ENCODE measurements at regions of chr5 and their contacts with region 1.

Region 1: GRCh38 chr5:122192497-122193496 is 63.5 kb downstream of the ZNF474 start:
- DNase-seq: no peak
- ATAC-seq: peak; percentile 63
- H3K4me3 Mint-ChIP-seq: no peak overlapping the region
- H3K27ac Mint-ChIP-seq: no peak overlapping the region
- H3K4me1 Mint-ChIP-seq: no peaks in the 10 kb centered on the region
- H3K27me3 Mint-ChIP-seq: peaks cover 13% of the 10 kb centered on the region

Region 2: DNA sequence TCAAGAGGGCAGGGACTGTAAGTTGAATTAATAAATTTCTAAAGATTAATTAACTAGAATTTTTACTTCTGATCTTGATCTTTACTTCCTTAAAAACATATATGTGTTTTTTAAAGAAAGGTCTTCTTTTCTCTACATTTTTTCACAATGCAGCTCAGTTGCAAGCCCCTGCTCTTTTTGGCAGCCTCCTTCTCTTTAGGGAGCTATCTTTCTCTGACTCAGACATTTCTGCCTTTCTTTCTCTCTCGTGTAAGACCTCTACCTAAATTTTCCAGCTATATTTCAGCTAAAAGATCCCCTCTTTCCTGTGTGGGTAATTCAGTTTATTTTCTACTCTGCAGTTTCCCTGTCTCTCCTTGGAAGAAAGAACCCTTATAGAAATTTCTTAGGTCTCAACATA is 80.9 kb after region 1 on chr5:
- CTCF ChIA-PET with region 1: no interaction called
- POLR2A ChIA-PET with region 1: no interaction called
- intact Hi-C with region 1: no loop called
- DNase-seq: no peak
- ATAC-seq: no peak
- H3K4me3 Mint-ChIP-seq: no peak overlapping the region
- H3K27ac Mint-ChIP-seq: no peak overlapping the region
- H3K4me1 Mint-ChIP-seq: no peaks in the 10 kb centered on the region
- H3K27me3 Mint-ChIP-seq: peaks cover 1% of the 10 kb centered on the region

Region 3: GRCh38 chr5:122415030-122415800 is 222.4 kb after region 1 on chr5:
- CTCF ChIA-PET with region 1: interaction called, 3 read pairs
- POLR2A ChIA-PET with region 1: no interaction called
- intact Hi-C with region 1: loop called (anchors 2 to 5 kb)
- DNase-seq: peak; percentile 26
- ATAC-seq: peak; percentile 57
- H3K4me3 Mint-ChIP-seq: no peak overlapping the region
- H3K27ac Mint-ChIP-seq: no peak overlapping the region
- H3K4me1 Mint-ChIP-seq: no peaks in the 10 kb centered on the region
- H3K27me3 Mint-ChIP-seq: peaks cover 22% of the 10 kb centered on the region

Region 4: GRCh38 chr5:122492664-122493063 is 299.9 kb after region 1 on chr5:
- CTCF ChIA-PET with region 1: no interaction called
- POLR2A ChIA-PET with region 1: no interaction called
- intact Hi-C with region 1: loop called in 1 of 2 experiments (anchors 10 kb)
- DNase-seq: no peak
- ATAC-seq: no peak
- H3K4me3 Mint-ChIP-seq: no peak overlapping the region
- H3K27ac Mint-ChIP-seq: no peak overlapping the region
- H3K4me1 Mint-ChIP-seq: no peaks in the 10 kb centered on the region
- H3K27me3 Mint-ChIP-seq: no peaks in the 10 kb centered on the region

Region 5: GRCh38 chr5:123371575-123372179 is 1178.9 kb after region 1 on chr5:
- CTCF ChIA-PET with region 1: no interaction called
- POLR2A ChIA-PET with region 1: no interaction called
- intact Hi-C with region 1: loop called in 1 of 2 experiments (anchors 10 kb)
- DNase-seq: peak; percentile 50
- ATAC-seq: no peak
- H3K4me3 Mint-ChIP-seq: no peak overlapping the region
- H3K27ac Mint-ChIP-seq: no peak overlapping the region
- H3K4me1 Mint-ChIP-seq: peaks cover 2% of the 10 kb centered on the region
- H3K27me3 Mint-ChIP-seq: no peaks in the 10 kb centered on the region